Colonic mucosa (tissue), 4 donors: ENCODE measurements at regions of chr16 and their contacts with region 1.

Region 1: GRCh38 chr16:24568392-24568791 is 29.0 kb downstream of the RBBP6 start:
- DNase-seq: no peak
- H3K4me3 ChIP-seq: no peak overlapping the region
- H3K27ac ChIP-seq: no peak overlapping the region
- H3K4me1 ChIP-seq: no peaks in the 10 kb centered on the region
- H3K27me3 ChIP-seq: no peaks in the 10 kb centered on the region
- CTCF ChIP-seq: no peak

Region 2: GRCh38 chr16:24088767-24089166 is 479.6 kb before region 1 on chr16:
- intact Hi-C with region 1: no loop called
- DNase-seq: no peak
- H3K4me3 ChIP-seq: no peak overlapping the region
- H3K27ac ChIP-seq: no peak overlapping the region
- H3K4me1 ChIP-seq: no peaks in the 10 kb centered on the region
- H3K27me3 ChIP-seq: no peaks in the 10 kb centered on the region
- CTCF ChIP-seq: no peak

Region 3: DNA sequence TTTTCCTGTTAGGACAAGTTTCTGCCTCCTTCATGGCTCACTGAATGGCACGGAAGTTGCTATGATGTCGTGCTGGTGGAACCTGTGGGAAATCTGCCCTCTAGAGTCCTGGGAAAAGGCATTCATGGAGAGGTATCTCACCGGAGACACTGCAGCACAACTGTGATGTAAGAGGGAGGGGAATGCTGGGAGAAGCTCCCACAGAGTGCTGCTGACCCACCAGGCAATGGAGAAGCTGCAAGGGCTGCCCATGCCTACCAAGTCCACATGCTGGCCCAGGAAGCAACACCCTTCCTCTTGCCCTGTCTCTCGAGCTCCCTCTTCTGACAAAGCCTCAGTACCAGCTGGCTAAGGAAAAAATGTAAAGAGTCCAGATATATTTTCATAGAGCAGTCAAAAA is 232.2 kb after region 1 on chr16:
- intact Hi-C with region 1: loop called (anchors 10 kb)
- DNase-seq: no peak
- H3K4me3 ChIP-seq: no peak overlapping the region
- H3K27ac ChIP-seq: no peak overlapping the region
- H3K4me1 ChIP-seq: no peaks in the 10 kb centered on the region
- H3K27me3 ChIP-seq: no peaks in the 10 kb centered on the region
- CTCF ChIP-seq: no peak